ENCODE measurements at regions of chr4 and their contacts with region 1.

Region 1: GRCh38 chr4:67714248-67714583 is 13.3 kb upstream of the UBA6 start:
- H3K4me3 ChIP-seq: no peak overlapping the region
- H3K27ac ChIP-seq: no peak overlapping the region
- H3K4me1 ChIP-seq: no peaks in the 10 kb centered on the region
- CTCF ChIP-seq: no peak

Region 2: GRCh38 chr4:67632492-67632891 is 81.7 kb before region 1 on chr4:
- CTCF ChIA-PET with region 1: no interaction called
- POLR2A ChIA-PET with region 1: no interaction called
- H3K4me3 ChIP-seq: no peak overlapping the region
- H3K27ac ChIP-seq: no peak overlapping the region
- H3K4me1 ChIP-seq: no peaks in the 10 kb centered on the region
- CTCF ChIP-seq: no peak

Region 3: DNA sequence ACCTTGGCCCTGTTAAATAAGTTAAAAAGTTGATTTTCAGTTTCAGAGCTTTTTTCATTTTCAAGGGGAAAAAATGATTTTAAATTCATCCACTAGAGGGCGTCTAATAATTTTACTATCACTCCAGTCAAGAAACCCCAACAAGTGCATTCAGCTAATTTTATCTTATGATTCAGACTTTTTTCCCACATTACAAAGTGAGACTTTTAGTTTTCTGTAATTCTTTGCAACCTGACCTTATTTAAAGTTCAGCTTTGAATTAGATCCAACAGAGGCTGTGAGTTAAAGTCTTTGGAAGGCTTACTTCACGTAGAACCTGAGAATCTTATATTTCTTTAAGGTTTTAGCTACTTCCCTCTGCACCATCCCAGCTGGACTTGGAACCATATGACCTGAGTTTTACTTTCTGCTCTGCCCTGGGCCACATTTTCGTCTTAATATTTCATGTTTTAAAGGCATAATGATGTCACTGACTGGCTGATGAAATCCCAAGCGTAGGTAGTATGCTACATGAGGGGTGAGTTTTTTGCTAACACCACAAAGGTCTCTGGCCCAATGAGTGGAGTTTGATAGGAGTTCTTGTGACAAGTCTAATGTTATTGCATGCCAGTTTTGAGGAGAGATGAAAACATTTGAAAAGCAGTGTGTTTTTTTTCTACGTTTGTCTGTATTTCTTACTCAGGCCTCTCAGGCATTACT is 32.7 kb after region 1 on chr4:
- CTCF ChIA-PET with region 1: interaction called, 12 read pairs
- POLR2A ChIA-PET with region 1: no interaction called
- H3K4me3 ChIP-seq: no peak overlapping the region
- H3K27ac ChIP-seq: no peak overlapping the region
- H3K4me1 ChIP-seq: 0 out of 2 replicates have a peak, but pooled peaks cover 3% of the 10 kb centered on the region
- CTCF ChIP-seq: no peak

Region 4: DNA sequence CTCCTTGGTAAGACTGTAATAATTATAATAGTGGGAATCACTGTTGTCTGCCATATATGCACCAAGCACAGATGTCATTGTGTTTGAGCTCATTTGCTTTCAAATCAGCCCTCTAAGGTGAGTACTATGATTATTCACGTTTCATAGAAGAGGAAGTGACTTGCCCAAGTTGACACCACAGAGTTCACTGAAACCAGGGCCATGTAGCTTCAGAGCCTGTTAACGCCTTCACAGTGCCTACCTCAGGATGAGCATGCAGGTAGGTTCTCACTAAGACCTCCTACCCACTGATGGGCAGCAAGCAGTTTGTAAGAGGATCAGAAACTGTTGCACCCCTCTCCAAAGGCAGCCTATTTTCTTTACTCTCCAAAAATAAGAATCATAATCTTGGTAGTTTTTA is 221.7 kb after region 1 on chr4:
- CTCF ChIA-PET with region 1: no interaction called
- POLR2A ChIA-PET with region 1: no interaction called
- H3K4me3 ChIP-seq: no peak overlapping the region
- H3K27ac ChIP-seq: no peak overlapping the region
- H3K4me1 ChIP-seq: no peaks in the 10 kb centered on the region; the same call in 1 of the 2 replicates
- CTCF ChIP-seq: no peak